ENCODE measurements at regions of chr5 and their contacts with region 1.

Region 1: DNA sequence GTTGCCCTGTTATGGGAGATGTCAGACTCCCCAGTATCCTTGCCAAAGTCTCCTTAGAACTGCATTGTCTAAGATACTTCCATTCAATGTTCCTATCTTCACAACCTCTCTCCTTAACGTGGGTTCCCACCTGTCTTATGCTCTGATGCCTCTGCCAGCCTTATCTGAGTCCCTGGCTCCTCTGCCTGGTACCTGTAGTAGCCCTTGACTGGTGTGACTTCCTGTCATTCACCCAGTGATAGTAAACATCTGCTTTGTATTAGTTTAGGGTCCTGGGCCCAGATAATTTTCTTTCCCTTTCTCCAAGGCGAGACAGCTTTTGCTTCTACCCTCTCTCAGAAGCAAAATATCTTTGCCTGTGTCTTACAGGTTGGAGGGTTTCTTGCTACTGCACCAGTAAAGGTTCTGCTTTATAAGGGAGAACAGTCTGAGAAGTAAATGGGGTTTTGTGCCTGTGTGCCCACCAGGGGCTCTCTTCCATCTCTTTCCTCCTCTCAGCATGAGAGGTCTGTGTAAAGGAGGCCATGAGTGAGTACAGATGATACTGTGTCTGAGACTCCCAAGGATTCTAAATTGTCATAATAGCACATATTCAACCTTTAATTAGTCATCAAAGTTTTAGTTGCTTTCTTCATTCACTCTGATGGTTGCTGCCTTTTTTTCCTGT is 220.8 kb downstream of the PRR16 start:
- DNase-seq: peak; percentile 24
- H3K4me3 Mint-ChIP-seq: no peak overlapping the region
- H3K27ac Mint-ChIP-seq: no peak overlapping the region
- H3K4me1 Mint-ChIP-seq: peaks cover 42% of the 10 kb centered on the region
- H3K27me3 Mint-ChIP-seq: no peaks in the 10 kb centered on the region
- CTCF ChIP-seq: no peak

Region 2: DNA sequence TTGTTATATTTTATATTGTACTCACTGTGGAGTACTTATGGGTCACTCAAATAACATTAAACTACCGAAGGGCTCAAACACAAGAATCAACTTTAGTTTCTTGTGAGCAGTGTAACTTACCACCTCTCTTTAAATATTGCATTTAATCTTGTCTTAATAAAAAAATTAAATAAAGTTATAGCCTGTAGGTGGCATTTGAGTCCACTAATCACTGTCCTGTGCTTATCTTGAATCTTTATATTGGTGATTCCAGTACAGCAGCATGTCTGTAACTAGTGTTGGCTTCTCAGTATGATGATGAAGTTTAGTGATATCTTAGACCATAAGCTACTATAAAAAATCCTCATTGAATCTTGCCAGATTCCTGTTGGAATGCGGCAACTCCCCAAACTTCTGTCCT is 741.7 kb before region 1 on chr5:
- CTCF ChIA-PET with region 1: no interaction called
- intact Hi-C with region 1: loop called (anchors 1 kb)
- DNase-seq: no peak
- H3K4me3 Mint-ChIP-seq: no peak overlapping the region
- H3K27ac Mint-ChIP-seq: no peak overlapping the region
- H3K4me1 Mint-ChIP-seq: no peaks in the 10 kb centered on the region
- H3K27me3 Mint-ChIP-seq: no peaks in the 10 kb centered on the region
- CTCF ChIP-seq: peak; percentile 12

Region 3: DNA sequence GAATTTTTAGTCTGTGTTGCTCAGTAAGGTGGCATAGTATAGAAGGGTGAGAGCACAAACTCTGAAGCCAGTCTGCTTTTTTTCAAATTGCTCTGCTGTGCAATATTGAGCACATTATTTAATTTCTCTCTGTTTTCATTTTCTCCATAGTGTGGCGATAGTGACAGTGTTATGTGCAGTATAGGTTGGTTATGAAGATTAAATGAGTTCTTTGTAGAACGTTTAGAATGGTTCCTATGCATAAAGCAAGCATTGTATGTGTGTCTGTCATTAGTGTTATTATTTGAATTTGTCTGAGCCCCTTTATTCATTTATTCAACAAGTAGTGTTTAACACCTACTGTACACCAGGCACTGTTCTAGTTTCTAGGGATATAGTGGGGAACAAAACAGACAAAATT is 211.6 kb before region 1 on chr5:
- CTCF ChIA-PET with region 1: no interaction called
- intact Hi-C with region 1: loop called (anchors 1 kb)
- DNase-seq: no peak
- H3K4me3 Mint-ChIP-seq: no peak overlapping the region
- H3K27ac Mint-ChIP-seq: no peak overlapping the region
- H3K4me1 Mint-ChIP-seq: peaks cover 16% of the 10 kb centered on the region
- H3K27me3 Mint-ChIP-seq: no peaks in the 10 kb centered on the region
- CTCF ChIP-seq: no peak

Region 4: DNA sequence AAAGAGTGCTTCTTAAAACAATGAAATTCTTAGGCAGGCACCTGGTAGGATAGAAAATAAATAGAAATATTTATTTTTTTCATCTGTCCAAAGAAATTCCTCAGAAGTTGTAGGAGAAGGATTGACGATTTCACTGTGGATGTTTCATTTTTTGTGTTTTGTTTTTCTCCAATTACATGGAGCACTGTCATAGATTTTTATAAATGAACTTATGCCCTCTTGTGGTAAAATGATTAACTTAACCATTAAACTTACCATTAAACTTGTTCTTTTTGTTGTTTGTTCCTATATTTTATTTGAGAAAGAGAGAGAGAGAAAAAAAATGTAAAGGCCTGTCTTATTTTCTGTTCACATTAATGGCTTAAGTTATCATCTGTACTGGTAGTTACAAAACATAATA is 118.4 kb after region 1 on chr5:
- CTCF ChIA-PET with region 1: no interaction called
- intact Hi-C with region 1: loop called (anchors 2 kb)
- DNase-seq: no peak
- H3K4me3 Mint-ChIP-seq: no peak overlapping the region
- H3K27ac Mint-ChIP-seq: no peak overlapping the region
- H3K4me1 Mint-ChIP-seq: peaks cover 14% of the 10 kb centered on the region
- H3K27me3 Mint-ChIP-seq: no peaks in the 10 kb centered on the region
- CTCF ChIP-seq: no peak

Measured in Calu3 (cell line).